Calu3 (cell line): ENCODE measurements at regions of chrX and their contacts with region 1.

Region 1: GRCh38 chrX:135923353-135923752 is 29.8 kb downstream of the SAGE1 start:
- DNase-seq: peak; percentile 6
- H3K4me3 Mint-ChIP-seq: no peak overlapping the region
- H3K27ac Mint-ChIP-seq: no peak overlapping the region
- H3K4me1 Mint-ChIP-seq: no peaks in the 10 kb centered on the region
- H3K27me3 Mint-ChIP-seq: peaks cover 32% of the 10 kb centered on the region
- CTCF ChIP-seq: no peak

Region 2: DNA sequence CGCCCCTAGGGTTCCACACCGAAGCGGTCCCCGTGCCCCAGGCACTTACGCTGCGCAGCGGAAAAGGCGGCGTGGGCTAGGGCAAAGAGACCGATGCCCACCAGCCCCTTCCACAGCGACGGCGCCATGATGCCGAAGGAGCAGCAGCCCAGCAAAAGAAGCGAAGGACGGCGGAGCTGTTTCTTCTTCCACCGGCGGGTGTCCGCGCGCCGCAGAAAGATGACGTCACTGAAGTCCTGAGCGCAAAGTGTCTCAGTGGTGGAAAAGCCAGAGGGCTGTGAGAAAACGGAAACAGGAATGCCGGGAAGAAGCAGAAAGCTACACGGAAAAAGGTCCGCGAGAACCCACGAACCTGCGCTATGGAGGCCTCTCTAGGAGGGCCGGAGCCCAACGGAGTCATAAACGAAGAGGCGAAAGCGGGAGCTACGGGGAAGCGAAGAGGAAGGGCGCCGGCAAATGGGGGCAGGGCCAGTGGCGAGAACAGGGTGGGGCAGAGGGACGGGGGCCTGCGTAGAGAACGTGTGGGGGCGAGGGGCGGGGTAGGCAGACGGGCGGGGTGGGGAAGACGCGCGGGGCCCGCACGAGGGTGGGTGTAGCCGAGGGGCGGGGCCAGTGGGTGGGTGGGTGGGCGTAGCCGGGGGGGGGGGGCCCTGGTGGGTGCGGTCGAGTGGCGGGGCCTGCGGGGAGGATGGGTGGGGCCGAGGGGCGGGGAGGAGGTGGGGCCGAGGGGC is 50.4 kb after region 1 on chrX and contains the start of gene MMGT1:
- CTCF ChIA-PET with region 1: no interaction called
- intact Hi-C with region 1: loop called (anchors 2 kb)
- DNase-seq: peak; percentile 82
- H3K4me3 Mint-ChIP-seq: peak within 1 kb of the TSS; percentile 88
- H3K27ac Mint-ChIP-seq: peak within 1 kb of the TSS; percentile 95
- H3K4me1 Mint-ChIP-seq: peaks cover 11% of the 10 kb centered on the region
- H3K27me3 Mint-ChIP-seq: no peaks in the 10 kb centered on the region
- CTCF ChIP-seq: no peak
- total RNA-seq, gene MMGT1: 33.0 and 37.1 TPM in 2 replicates